ENCODE measurements at regions of chr3 and their contacts with region 1.

Region 1: DNA sequence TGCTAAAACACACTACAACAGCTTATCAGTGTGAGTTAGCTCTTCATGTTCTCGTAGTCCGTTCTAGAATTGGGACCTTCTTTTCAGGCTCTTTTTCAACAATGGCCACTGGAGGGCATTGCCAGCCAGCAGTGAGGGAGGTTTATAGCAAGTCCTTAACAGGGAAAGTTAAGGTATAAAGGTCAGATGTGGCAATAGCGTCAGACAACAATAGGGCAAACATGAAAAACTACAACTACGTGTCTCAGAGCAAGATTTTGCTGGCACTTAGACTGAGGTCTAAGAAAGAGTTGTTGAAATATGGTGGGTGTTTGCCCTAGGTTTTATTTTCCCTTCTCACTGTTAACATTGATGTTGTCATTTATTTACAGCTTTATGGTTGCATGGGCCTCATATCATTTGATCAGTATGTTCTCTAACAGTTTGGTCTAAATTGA is 161.4 kb downstream of the GMNC start:
- DNase-seq: peak; percentile 87
- H3K4me3 ChIP-seq: no peak overlapping the region
- H3K27ac ChIP-seq: peak overlapping the region; percentile 11
- H3K4me1 ChIP-seq: peaks cover 45% of the 10 kb centered on the region
- H3K27me3 ChIP-seq: no peaks in the 10 kb centered on the region
- CTCF ChIP-seq: peak; percentile 88

Region 2: GRCh38 chr3:189961525-189962161 is 739.5 kb before region 1 on chr3:
- CTCF ChIA-PET with region 1: interaction called, 3 read pairs
- POLR2A ChIA-PET with region 1: no interaction called
- intact Hi-C with region 1: loop called (anchors 2 kb)
- DNase-seq: peak; percentile 94
- H3K4me3 ChIP-seq: no peak overlapping the region
- H3K27ac ChIP-seq: no peak overlapping the region
- H3K4me1 ChIP-seq: peaks cover 29% of the 10 kb centered on the region
- H3K27me3 ChIP-seq: no peaks in the 10 kb centered on the region
- CTCF ChIP-seq: peak; percentile 93

Region 3: GRCh38 chr3:190443257-190443656 is 257.9 kb before region 1 on chr3:
- CTCF ChIA-PET with region 1: interaction called, 3 read pairs
- POLR2A ChIA-PET with region 1: no interaction called
- intact Hi-C with region 1: loop called (anchors 10 kb)
- DNase-seq: peak; percentile 74
- H3K4me3 ChIP-seq: no peak overlapping the region
- H3K27ac ChIP-seq: no peak overlapping the region
- H3K4me1 ChIP-seq: peaks cover 31% of the 10 kb centered on the region
- H3K27me3 ChIP-seq: no peaks in the 10 kb centered on the region
- CTCF ChIP-seq: peak; percentile 65

Region 4: GRCh38 chr3:190591083-190591482 is 110.0 kb before region 1 on chr3:
- CTCF ChIA-PET with region 1: interaction called, 7 read pairs
- POLR2A ChIA-PET with region 1: no interaction called
- intact Hi-C with region 1: loop called (anchors 10 kb)
- DNase-seq: no peak
- H3K4me3 ChIP-seq: no peak overlapping the region
- H3K27ac ChIP-seq: peak overlapping the region; percentile 40
- H3K4me1 ChIP-seq: peaks cover 90% of the 10 kb centered on the region
- H3K27me3 ChIP-seq: no peaks in the 10 kb centered on the region
- CTCF ChIP-seq: no peak

Region 5: GRCh38 chr3:190996181-190996775 is 295.2 kb after region 1 on chr3:
- CTCF ChIA-PET with region 1: interaction called, 6 read pairs
- POLR2A ChIA-PET with region 1: no interaction called
- intact Hi-C with region 1: loop called (anchors 1 kb)
- DNase-seq: no peak
- H3K4me3 ChIP-seq: no peak overlapping the region
- H3K27ac ChIP-seq: peak overlapping the region; percentile 54
- H3K4me1 ChIP-seq: peaks cover 37% of the 10 kb centered on the region
- H3K27me3 ChIP-seq: no peaks in the 10 kb centered on the region
- CTCF ChIP-seq: no peak

Region 6: GRCh38 chr3:191235331-191236314 is 534.5 kb after region 1 on chr3:
- CTCF ChIA-PET with region 1: no interaction called
- POLR2A ChIA-PET with region 1: no interaction called
- intact Hi-C with region 1: loop called (anchors 10 kb)
- DNase-seq: no peak
- H3K4me3 ChIP-seq: no peak overlapping the region
- H3K27ac ChIP-seq: no peak overlapping the region
- H3K4me1 ChIP-seq: peaks cover 15% of the 10 kb centered on the region
- H3K27me3 ChIP-seq: no peaks in the 10 kb centered on the region
- CTCF ChIP-seq: no peak